Caco-2 (cell line): ENCODE measurements at regions of chr1 and their contacts with region 1.

Region 1: GRCh38 chr1:11654137-11654938 is at the starts of genes FBXO2 and FBXO44:
- DNase-seq: peak; percentile 90 to 91
- H3K4me3 ChIP-seq: peak within 1 kb of the TSS; percentile 91
- H3K4me3 Mint-ChIP-seq: peak within 1 kb of the TSS; percentile 76
- H3K27ac Mint-ChIP-seq: peak within 1 kb of the TSS; percentile 82
- H3K4me1 ChIP-seq: peaks cover 8% of the 10 kb centered on the region
- H3K4me1 Mint-ChIP-seq: no peaks in the 10 kb centered on the region
- H3K27me3 ChIP-seq: no peaks in the 10 kb centered on the region
- H3K27me3 Mint-ChIP-seq: no peaks in the 10 kb centered on the region
- CTCF ChIP-seq: no peak
- total RNA-seq, gene FBXO2: 78.5 and 79.8 TPM in 2 replicates
- total RNA-seq, gene FBXO44: 21.2 and 22.6 TPM in 2 replicates

Region 2: DNA sequence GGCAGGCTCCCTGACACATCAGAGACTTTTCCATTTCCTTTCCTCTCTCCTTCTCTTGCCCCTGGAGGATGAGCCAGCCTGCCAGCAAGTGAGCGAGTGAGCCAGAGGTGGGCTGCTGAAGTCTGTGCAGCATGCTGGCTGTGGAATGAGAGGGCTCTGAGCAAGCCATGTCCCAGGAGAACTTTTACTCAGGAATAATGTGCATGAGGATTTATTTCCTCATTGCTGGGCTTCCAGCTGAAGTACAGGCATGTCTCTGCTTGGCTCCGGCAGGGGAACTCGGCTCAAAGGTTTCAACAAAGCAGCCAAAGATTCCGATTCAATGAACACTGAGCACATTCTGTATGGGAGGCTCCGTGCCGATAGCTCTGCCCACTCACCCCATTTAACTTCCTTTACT is 337.6 kb before region 1 on chr1:
- CTCF ChIA-PET with region 1: no interaction called
- POLR2A ChIA-PET with region 1: no interaction called
- intact Hi-C with region 1: loop called (anchors 1 kb)
- DNase-seq: no peak
- H3K4me3 ChIP-seq: no peak overlapping the region
- H3K4me3 Mint-ChIP-seq: no peak overlapping the region
- H3K27ac Mint-ChIP-seq: no peak overlapping the region
- H3K4me1 ChIP-seq: no peaks in the 10 kb centered on the region
- H3K4me1 Mint-ChIP-seq: peaks cover 7% of the 10 kb centered on the region
- H3K27me3 ChIP-seq: no peaks in the 10 kb centered on the region
- H3K27me3 Mint-ChIP-seq: peaks cover 2% of the 10 kb centered on the region
- CTCF ChIP-seq: no peak

Region 3: DNA sequence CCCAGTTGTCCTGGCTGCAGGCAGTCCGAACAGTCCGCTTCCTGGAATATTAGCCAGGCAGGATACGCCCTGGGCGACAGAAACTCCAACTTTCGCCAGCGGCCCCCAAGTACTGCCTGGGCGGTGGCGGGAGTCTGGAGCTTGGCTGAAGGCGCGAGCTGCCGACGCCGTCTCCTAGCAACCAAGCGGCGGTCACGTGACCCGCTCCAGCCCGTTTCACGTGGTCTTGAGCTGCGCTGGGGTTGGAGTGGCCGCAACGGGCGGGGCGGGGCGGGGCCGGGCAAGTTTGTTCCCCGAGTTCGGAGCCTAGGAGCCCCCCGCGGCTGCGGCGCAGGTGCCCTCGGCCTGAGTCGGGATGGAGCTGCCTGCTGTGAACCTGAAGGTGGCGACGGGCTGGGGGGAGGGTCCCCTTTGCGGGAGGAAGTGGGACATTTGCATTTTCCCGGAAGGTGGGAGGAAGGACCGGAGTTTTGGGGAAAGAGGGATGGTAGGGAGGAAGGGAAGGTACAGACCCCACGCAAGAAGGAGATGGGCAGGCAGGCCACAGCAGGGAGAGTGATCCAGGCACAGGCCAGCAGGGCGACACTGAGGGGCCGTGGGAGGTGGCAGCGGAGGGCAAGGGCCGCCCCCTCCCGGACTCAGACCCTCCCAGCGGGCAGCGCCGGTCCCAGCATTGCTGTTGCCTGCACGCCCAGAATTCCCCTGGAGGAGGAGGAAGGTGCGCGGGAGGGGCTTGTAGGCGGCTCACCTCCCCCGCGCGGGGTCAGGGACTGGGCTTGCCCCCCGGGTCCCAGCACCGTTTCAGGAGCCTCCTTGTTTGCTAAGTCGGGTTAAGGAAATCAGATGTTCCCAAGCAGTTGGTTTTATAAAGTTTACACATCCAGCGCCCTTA is 81.8 kb after region 1 on chr1 and contains the start of gene AGTRAP:
- CTCF ChIA-PET with region 1: interaction called, 3 read pairs
- POLR2A ChIA-PET with region 1: interaction called, 13 read pairs
- intact Hi-C with region 1: no loop called
- DNase-seq: peak; percentile 92 to 93
- H3K4me3 ChIP-seq: peak within 1 kb of the TSS; percentile 83
- H3K4me3 Mint-ChIP-seq: peak within 1 kb of the TSS; percentile 96
- H3K27ac Mint-ChIP-seq: peak within 1 kb of the TSS; percentile 83
- H3K4me1 ChIP-seq: peaks cover 6% of the 10 kb centered on the region
- H3K4me1 Mint-ChIP-seq: no peaks in the 10 kb centered on the region
- H3K27me3 ChIP-seq: no peaks in the 10 kb centered on the region
- H3K27me3 Mint-ChIP-seq: no peaks in the 10 kb centered on the region
- CTCF ChIP-seq: peak in 1 of 2 experiments; percentile 25
- total RNA-seq, gene AGTRAP: 44.2 and 44.4 TPM in 2 replicates